ENCODE measurements at regions of chr1 and their contacts with region 1.

Region 1: GRCh38 chr1:20194757-20195461 is 8.6 kb upstream of the PLA2G2C start:
- DNase-seq: peak; percentile 46 to 78 (median 71)
- ATAC-seq: peak; percentile 71
- H3K4me3 ChIP-seq: no peak overlapping the region
- H3K4me3 Mint-ChIP-seq: no peak overlapping the region
- H3K27ac ChIP-seq: no peak overlapping the region
- H3K27ac Mint-ChIP-seq: no peak overlapping the region
- H3K4me1 ChIP-seq: no peaks in the 10 kb centered on the region
- H3K4me1 Mint-ChIP-seq: peaks cover 2% of the 10 kb centered on the region
- H3K27me3 ChIP-seq: no peaks in the 10 kb centered on the region
- H3K27me3 Mint-ChIP-seq: peaks cover 8% of the 10 kb centered on the region
- CTCF ChIP-seq: peak; percentile 85

Region 2: DNA sequence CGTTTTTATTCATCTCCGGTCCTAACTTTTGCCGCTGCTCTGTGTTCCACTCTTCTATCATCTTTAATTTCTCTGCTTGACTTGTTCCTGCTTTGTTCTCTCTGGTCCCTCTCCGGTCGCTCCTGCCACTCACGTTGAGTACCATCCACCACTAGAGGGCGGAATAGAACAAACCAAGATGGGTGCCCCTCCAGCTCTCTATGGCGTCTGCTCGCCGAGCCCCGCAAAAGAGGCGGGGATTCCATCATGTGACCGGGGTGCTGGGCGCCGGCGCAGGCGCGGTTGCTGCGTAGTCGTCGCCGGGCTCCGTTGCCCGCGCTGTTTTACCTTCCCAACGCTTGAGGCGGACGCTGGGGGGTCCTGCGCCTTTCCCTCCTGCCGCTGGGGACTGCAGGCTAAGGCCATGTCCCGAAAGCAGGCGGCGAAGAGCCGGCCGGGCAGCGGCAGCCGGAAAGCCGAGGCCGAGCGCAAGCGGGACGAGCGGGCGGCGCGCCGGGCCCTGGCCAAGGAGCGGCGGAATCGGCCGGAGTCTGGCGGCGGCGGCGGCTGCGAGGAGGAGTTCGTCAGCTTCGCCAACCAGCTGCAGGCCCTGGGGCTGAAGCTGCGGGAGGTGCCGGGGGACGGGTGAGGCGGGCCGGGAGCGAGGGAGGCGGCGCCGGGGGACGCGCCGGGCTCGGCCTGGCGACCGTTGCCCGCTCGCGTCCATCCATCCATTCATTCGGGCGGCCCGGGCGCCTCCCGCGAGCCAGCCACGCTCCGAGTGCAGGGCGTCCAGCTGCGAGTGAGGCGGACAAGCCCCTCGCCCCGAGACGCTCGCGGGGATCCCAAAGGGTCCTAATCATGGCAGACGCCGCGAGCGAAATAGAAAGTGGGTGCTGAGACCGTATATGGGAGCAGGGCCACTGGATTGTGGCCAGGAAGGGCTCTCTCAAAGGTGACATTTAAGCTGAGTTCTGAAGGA is 312.5 kb before region 1 on chr1 and contains the start of gene OTUD3:
- CTCF ChIA-PET with region 1: interaction called, 12 read pairs
- POLR2A ChIA-PET with region 1: no interaction called
- intact Hi-C with region 1: no loop called
- DNase-seq: peak; percentile 89 to 99 (median 95)
- ATAC-seq: peak; percentile 97
- H3K4me3 ChIP-seq: peak within 1 kb of the TSS; percentile 71 to 88
- H3K4me3 Mint-ChIP-seq: peak within 1 kb of the TSS; percentile 90
- H3K27ac ChIP-seq: peak within 1 kb of the TSS; percentile 67 to 77
- H3K27ac Mint-ChIP-seq: peak within 1 kb of the TSS; percentile 61
- H3K4me1 ChIP-seq: peaks cover 18% of the 10 kb centered on the region
- H3K4me1 Mint-ChIP-seq: peaks cover 43% of the 10 kb centered on the region
- H3K27me3 ChIP-seq: no peaks in the 10 kb centered on the region
- H3K27me3 Mint-ChIP-seq: no peaks in the 10 kb centered on the region
- CTCF ChIP-seq: peak; percentile 90
- total RNA-seq, gene OTUD3: 16.5 to 17.3 TPM

Region 3: GRCh38 chr1:19974822-19975416 is 220.0 kb before region 1 on chr1:
- CTCF ChIA-PET with region 1: interaction called, 9 read pairs
- POLR2A ChIA-PET with region 1: no interaction called
- intact Hi-C with region 1: loop called in 1 of 2 experiments (anchors 1 kb)
- DNase-seq: peak in 3 of 9 experiments; percentile 48 to 60 (median 52)
- ATAC-seq: no peak
- H3K4me3 ChIP-seq: no peak overlapping the region
- H3K4me3 Mint-ChIP-seq: no peak overlapping the region
- H3K27ac ChIP-seq: no peak overlapping the region
- H3K27ac Mint-ChIP-seq: no peak overlapping the region
- H3K4me1 ChIP-seq: no peaks in the 10 kb centered on the region
- H3K4me1 Mint-ChIP-seq: no peaks in the 10 kb centered on the region
- H3K27me3 ChIP-seq: peaks cover 0 to 2% of the 10 kb centered on the region in 2 experiments
- H3K27me3 Mint-ChIP-seq: peaks cover 41% of the 10 kb centered on the region
- CTCF ChIP-seq: no peak

Region 4: DNA sequence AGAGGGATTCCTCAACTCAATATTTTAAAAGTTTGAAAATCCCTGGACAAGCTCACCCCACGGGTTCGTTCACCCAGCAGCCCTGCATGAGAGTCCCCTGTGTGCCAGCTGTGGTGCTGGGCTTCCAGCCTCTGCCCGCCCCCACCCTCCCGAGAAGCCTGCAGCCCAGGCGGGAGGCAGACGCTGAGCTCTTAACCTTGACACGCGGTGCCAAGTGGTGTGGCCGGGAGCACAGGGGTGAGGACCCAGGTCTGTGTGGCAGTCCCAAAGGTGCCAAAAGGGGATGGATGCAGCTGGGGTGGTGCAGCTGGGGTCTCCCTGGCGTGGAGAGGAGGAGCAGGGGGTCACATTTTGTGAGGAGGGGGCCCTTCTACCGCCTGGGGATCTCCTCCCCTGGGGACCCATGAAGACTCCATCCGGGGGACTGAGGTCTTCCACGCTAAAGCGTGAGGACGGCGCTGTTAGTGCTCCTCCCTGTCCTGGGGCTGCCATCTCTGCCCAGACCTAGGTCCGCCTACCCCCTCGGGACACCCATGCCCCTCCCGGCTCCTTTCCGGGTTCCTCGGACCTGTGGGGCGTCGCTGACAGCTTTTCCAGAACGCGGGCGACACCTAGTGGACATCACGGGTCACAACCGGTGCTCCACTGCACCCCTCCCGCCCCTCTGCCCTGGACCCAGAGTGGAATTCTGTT is 42.9 kb before region 1 on chr1:
- CTCF ChIA-PET with region 1: interaction called, 34 read pairs
- POLR2A ChIA-PET with region 1: no interaction called
- intact Hi-C with region 1: loop called (anchors 2 to 5 kb)
- DNase-seq: peak; percentile 56 to 88 (median 79)
- ATAC-seq: peak; percentile 94
- H3K4me3 ChIP-seq: peak overlapping the region; percentile 46 to 53
- H3K4me3 Mint-ChIP-seq: peak overlapping the region; percentile 79
- H3K27ac ChIP-seq: no peak overlapping the region
- H3K27ac Mint-ChIP-seq: no peak overlapping the region
- H3K4me1 ChIP-seq: peaks cover 6% of the 10 kb centered on the region
- H3K4me1 Mint-ChIP-seq: peaks cover 9% of the 10 kb centered on the region
- H3K27me3 ChIP-seq: no peaks in the 10 kb centered on the region
- H3K27me3 Mint-ChIP-seq: no peaks in the 10 kb centered on the region
- CTCF ChIP-seq: peak; percentile 86

Region 5: DNA sequence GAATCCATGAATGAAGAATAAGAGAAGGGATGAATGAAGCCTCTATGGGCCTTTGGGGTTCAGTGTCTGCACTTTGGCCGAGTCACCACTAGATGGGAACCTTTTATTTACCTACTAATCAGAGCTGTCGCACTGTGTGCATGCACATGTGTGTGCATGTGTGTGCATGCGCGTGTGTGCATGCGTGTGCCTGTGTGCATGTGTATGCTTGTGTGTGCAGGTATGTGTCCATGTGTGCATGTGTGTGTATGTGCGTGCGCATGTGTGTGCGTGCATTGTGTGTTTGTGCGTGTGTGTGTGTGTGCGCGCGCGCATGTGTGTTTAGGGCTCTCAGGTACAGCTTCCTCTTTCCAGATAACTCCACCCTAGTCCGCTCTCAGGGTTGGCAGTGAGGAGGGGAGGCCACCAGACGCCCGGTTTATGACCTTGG is 29.4 kb before region 1 on chr1:
- CTCF ChIA-PET with region 1: interaction called, 12 read pairs
- POLR2A ChIA-PET with region 1: no interaction called
- intact Hi-C with region 1: no loop called
- DNase-seq: peak in 1 of 9 experiments; percentile 17
- ATAC-seq: no peak
- H3K4me3 ChIP-seq: no peak overlapping the region
- H3K4me3 Mint-ChIP-seq: no peak overlapping the region
- H3K27ac ChIP-seq: no peak overlapping the region
- H3K27ac Mint-ChIP-seq: no peak overlapping the region
- H3K4me1 ChIP-seq: no peaks in the 10 kb centered on the region
- H3K4me1 Mint-ChIP-seq: no peaks in the 10 kb centered on the region
- H3K27me3 ChIP-seq: peaks cover 0 to 2% of the 10 kb centered on the region in 2 experiments
- H3K27me3 Mint-ChIP-seq: peaks cover 15% of the 10 kb centered on the region
- CTCF ChIP-seq: no peak

Region 6: GRCh38 chr1:20207419-20207959 is 12.6 kb after region 1 on chr1:
- CTCF ChIA-PET with region 1: interaction called, 30 read pairs
- POLR2A ChIA-PET with region 1: no interaction called
- intact Hi-C with region 1: no loop called
- DNase-seq: no peak
- ATAC-seq: no peak
- H3K4me3 ChIP-seq: no peak overlapping the region
- H3K4me3 Mint-ChIP-seq: no peak overlapping the region
- H3K27ac ChIP-seq: no peak overlapping the region
- H3K27ac Mint-ChIP-seq: no peak overlapping the region
- H3K4me1 ChIP-seq: peaks cover 3% of the 10 kb centered on the region
- H3K4me1 Mint-ChIP-seq: peaks cover 2% of the 10 kb centered on the region
- H3K27me3 ChIP-seq: no peaks in the 10 kb centered on the region
- H3K27me3 Mint-ChIP-seq: peaks cover 25% of the 10 kb centered on the region
- CTCF ChIP-seq: no peak

Measured in CD8-positive, alpha-beta T cell (primary cell).